ENCODE measurements at regions of chr11 and their contacts with region 1.

Region 1: GRCh38 chr11:19742588-19743292 is 30.1 kb downstream of the NAV2 start:
- DNase-seq: no peak
- H3K4me3 ChIP-seq: no peak overlapping the region
- H3K27ac ChIP-seq: peak overlapping the region in 1 of 4 donors; percentile 13
- H3K4me1 ChIP-seq: peaks cover 12 to 63% (median 43%) of the 10 kb centered on the region in 4 donors
- H3K27me3 ChIP-seq: no peaks in the 10 kb centered on the region
- CTCF ChIP-seq: peak; percentile 86 to 93 (median 91)
- EP300 ChIP-seq: no peak
- POLR2A ChIP-seq: no peak

Region 2: GRCh38 chr11:19311308-19312030 is 431.3 kb before region 1 on chr11:
- intact Hi-C with region 1: loop called (anchors 10 kb)
- DNase-seq: no peak
- H3K4me3 ChIP-seq: no peak overlapping the region
- H3K27ac ChIP-seq: no peak overlapping the region
- H3K4me1 ChIP-seq: peaks cover 0 to 6% (median 5%) of the 10 kb centered on the region in 4 donors
- H3K27me3 ChIP-seq: peaks cover 0 to 10% (median 0%) of the 10 kb centered on the region in 4 donors
- CTCF ChIP-seq: peak; percentile 73 to 79 (median 79)
- EP300 ChIP-seq: no peak
- POLR2A ChIP-seq: no peak

Region 3: DNA sequence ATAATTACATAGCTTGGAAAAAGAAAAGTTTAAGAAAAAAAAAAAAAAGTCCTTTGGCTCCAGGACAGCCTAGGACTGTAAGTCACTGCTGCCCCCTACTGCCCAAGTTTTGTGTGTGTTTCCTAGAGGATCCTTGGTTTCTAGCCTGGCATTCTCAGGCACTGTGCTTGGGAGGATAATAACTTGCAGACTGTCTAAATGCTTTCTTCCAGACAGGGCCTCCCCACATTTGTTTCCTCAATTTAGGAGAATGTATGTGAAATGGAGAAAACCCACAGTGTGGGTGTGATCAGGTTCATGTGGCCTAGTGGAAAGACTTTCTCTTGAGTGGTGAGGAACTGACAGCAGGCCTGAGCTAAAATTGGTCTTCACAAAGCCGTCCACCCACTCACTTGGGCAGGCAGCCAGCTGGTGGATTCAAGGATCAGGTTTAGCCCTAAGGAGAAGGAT is 160.9 kb after region 1 on chr11:
- intact Hi-C with region 1: loop called (anchors 5 kb)
- DNase-seq: no peak
- H3K4me3 ChIP-seq: no peak overlapping the region
- H3K27ac ChIP-seq: peak overlapping the region in 1 of 4 donors; percentile 19
- H3K4me1 ChIP-seq: peaks cover 8 to 56% (median 44%) of the 10 kb centered on the region in 4 donors
- H3K27me3 ChIP-seq: no peaks in the 10 kb centered on the region
- CTCF ChIP-seq: peak; percentile 68 to 83 (median 72)
- EP300 ChIP-seq: no peak
- POLR2A ChIP-seq: no peak

Region 4: DNA sequence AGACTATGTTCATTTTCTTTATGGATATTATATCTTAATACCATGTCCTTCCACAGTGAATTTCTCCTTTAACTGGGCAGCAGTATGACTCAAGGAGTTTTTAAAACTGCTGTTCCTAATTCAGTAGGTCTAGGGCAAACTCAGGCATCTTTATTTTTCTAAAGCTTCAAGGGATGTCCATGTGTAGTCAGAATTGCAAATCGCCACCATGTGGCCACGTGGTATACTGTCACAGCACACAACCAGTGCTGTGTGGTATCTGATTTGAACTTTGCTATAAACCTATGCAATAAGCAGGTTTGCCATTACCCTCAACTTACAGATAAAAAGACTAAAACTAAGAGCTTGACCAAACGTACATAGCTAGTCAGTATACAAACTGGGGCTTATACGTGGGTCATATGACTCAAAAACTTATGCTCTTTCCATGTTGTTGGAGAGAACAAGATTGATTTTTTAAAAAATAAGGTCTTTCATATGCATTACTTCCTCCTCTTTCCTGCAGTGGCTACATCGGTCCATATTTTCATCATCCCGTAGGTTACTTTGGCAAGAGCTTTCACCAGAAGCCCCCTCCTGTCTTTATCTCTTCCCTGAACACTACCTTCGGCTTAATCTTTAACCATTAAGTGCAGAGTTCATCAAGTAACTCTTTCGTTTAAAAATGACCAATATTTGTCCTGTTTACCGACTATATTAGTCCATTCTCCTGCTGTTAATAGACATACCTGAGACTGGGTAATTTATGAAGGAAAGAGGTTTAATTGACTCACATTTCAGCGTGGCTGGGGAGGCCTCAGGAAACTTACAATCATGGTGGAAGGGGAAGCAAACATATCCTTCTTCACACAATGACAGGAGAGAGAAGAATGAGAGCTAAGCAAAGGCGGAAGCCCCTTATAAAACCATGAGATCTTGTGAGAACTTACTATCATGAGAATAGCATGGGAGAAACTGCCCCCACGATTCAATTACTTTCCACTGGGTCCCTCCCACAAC is 612.8 kb after region 1 on chr11:
- intact Hi-C with region 1: no loop called
- DNase-seq: no peak
- H3K4me3 ChIP-seq: no peak overlapping the region
- H3K27ac ChIP-seq: no peak overlapping the region
- H3K4me1 ChIP-seq: no peaks in the 10 kb centered on the region
- H3K27me3 ChIP-seq: peaks cover 0 to 10% (median 0%) of the 10 kb centered on the region in 4 donors
- CTCF ChIP-seq: peak; percentile 36 to 47 (median 47)
- EP300 ChIP-seq: no peak
- POLR2A ChIP-seq: no peak